Activated CD4-positive, alpha-beta memory T cell treated with anti-CD3 and anti-CD28 coated beads for 36 hours (primary cell): ENCODE measurements at regions of chr2 and their contacts with region 1.

Region 1: DNA sequence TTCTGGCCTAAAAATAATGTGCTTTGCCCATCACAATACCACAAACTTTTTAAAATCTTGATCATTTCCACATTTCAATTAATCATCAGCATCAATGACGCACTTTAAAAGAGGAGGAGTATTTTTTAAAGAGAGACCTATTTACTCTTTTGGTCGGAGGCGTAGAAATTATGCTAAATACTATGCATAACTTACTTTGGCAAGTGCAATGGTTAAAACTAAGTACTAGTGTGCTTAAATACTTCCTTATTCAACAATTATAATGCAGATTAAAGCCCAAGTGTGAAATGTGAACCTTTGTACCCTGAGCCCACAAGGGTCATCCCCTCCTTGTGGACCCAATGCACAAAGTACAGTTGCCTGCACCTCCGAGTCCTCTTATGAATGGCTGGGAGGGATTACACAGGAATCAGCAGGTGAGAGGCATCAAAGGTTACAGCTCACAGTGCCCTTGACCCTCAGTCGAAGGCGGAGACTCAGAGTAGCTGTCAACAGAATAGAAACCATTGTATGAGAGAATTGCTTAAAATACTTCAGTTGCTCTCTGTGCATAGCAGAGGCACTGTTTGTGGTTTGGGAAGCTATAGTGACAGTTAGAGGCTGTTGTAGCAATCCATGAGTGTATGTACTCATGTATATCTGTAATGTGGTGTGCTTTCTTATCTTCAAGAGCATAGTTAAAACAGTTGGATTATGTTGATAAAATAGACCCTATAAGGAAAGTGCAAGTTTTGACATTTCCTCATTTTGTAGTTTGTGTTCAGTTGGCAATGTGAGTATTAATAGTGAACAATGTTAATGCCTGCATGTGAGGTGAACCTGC is 151.7 kb upstream of the ITGA4 start:
- DNase-seq: peak; percentile 69
- H3K4me3 Mint-ChIP-seq: peak overlapping the region; percentile 48
- H3K27ac Mint-ChIP-seq: peak overlapping the region; percentile 97
- H3K4me1 Mint-ChIP-seq: peaks cover 74% of the 10 kb centered on the region
- H3K27me3 Mint-ChIP-seq: no peaks in the 10 kb centered on the region

Region 2: DNA sequence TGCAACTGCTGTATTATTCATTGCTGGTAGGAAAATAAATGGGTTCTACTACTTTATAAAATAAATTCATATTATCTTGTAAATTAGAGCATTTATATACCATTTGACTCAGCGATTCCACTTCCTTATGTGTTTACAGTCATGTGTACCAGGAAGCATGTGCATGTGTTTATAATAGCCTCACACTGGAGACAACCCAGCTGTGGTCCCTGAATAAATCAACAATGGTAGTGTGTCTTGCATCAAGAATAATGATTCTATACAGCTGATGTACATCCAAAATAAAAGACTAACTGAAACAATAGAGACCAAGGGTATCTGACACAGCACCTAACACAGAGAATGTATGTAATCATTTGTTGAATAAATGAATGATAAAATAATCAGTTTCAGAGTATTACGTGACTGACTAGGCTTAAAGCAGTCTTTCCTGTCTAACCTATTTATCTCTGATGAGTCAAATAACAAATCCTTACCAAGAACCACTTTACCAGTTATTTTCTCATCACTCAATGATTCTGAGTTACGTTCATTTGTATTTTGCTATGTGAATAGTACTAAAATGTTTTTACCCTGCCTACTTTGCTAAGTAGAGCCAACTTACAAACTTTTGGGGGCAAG is 108.3 kb before region 1 on chr2:
- CTCF ChIA-PET with region 1: no interaction called
- POLR2A ChIA-PET with region 1: no interaction called
- intact Hi-C with region 1: loop called (anchors 5 kb)
- DNase-seq: no peak
- H3K4me3 Mint-ChIP-seq: peak overlapping the region; percentile 6
- H3K27ac Mint-ChIP-seq: peak overlapping the region; percentile 85
- H3K4me1 Mint-ChIP-seq: peaks cover 51% of the 10 kb centered on the region
- H3K27me3 Mint-ChIP-seq: no peaks in the 10 kb centered on the region

Region 3: DNA sequence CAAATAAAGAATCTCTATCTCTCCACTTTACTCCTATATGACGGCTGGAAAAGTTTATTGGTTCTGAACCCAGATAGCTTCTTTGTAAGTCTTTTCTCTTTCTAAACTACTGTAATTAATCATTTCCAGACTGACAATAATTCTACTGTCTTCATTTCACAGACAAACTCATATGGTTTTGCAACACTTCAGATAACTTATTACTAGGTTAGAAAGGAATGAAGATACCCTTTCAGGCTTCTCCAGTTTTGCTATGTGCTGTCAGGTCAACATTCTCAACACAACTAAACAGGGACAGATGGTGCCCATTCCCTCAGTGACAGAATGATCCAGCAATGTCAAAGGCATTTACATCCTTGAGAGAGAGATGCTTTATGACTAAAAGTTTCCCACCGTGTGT is 46.8 kb before region 1 on chr2:
- CTCF ChIA-PET with region 1: no interaction called
- POLR2A ChIA-PET with region 1: no interaction called
- intact Hi-C with region 1: no loop called
- DNase-seq: no peak
- H3K4me3 Mint-ChIP-seq: no peak overlapping the region
- H3K27ac Mint-ChIP-seq: no peak overlapping the region
- H3K4me1 Mint-ChIP-seq: peaks cover 10% of the 10 kb centered on the region
- H3K27me3 Mint-ChIP-seq: no peaks in the 10 kb centered on the region

Region 4: GRCh38 chr2:181275643-181276070 is 29.9 kb before region 1 on chr2:
- CTCF ChIA-PET with region 1: interaction called, 4 read pairs
- POLR2A ChIA-PET with region 1: interaction called, 3 read pairs
- intact Hi-C with region 1: loop called (anchors 1 kb)
- DNase-seq: peak; percentile 33
- H3K4me3 Mint-ChIP-seq: no peak overlapping the region
- H3K27ac Mint-ChIP-seq: peak overlapping the region; percentile 71
- H3K4me1 Mint-ChIP-seq: peaks cover 41% of the 10 kb centered on the region
- H3K27me3 Mint-ChIP-seq: no peaks in the 10 kb centered on the region

Region 5: GRCh38 chr2:181466661-181467576 is 161.4 kb after region 1 on chr2:
- CTCF ChIA-PET with region 1: interaction called, 12 read pairs
- POLR2A ChIA-PET with region 1: interaction called, 4 read pairs
- intact Hi-C with region 1: no loop called
- DNase-seq: peak; percentile 83
- H3K4me3 Mint-ChIP-seq: no peak overlapping the region
- H3K27ac Mint-ChIP-seq: peak overlapping the region; percentile 77
- H3K4me1 Mint-ChIP-seq: peaks cover 84% of the 10 kb centered on the region
- H3K27me3 Mint-ChIP-seq: no peaks in the 10 kb centered on the region

Region 6: DNA sequence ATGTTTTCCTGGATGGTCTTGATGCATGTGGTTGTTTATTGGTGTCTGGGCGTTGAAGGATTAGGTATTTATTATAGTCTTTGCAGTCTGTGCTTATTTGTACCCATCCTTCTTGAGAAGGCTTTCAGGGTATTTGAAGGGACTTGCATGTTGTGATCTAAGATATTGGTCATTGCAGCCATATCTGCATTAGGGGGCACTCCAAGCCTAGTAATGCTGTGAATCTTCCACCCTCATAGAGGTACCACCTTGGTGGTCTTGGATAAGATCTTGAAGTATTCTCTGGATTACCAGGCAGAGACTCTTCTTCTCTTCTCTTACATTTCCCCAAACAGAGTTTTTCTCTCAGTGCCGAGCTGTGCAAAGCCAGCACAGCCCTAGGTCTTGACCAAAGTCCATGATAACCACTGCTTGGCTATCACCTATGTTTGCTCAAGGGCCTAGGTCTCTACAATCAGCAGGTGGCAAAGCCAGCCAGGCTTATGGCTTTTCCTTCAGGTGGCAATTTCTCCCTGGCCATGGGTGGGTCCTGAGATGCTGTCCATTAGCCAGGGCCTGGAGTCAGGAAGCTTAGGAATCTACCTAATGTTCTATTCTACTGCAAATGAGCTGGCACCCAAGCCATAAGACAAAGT is 664.8 kb after region 1 on chr2:
- CTCF ChIA-PET with region 1: no interaction called
- POLR2A ChIA-PET with region 1: no interaction called
- intact Hi-C with region 1: no loop called
- DNase-seq: no peak
- H3K4me3 Mint-ChIP-seq: no peak overlapping the region
- H3K27ac Mint-ChIP-seq: no peak overlapping the region
- H3K4me1 Mint-ChIP-seq: no peaks in the 10 kb centered on the region
- H3K27me3 Mint-ChIP-seq: peaks cover 20% of the 10 kb centered on the region